B cell (primary cell): ENCODE measurements at regions of chr7 and their contacts with region 1.

Region 1: GRCh38 chr7:130440527-130441365 is at the start of gene CEP41:
- DNase-seq: peak; percentile 93
- ATAC-seq: peak; percentile 97
- H3K4me3 ChIP-seq: peak within 1 kb of the TSS; percentile 26 to 90 (median 87)
- H3K4me3 Mint-ChIP-seq: peak within 1 kb of the TSS; percentile 99
- H3K27ac ChIP-seq: peak within 1 kb of the TSS; percentile 66 to 68
- H3K27ac Mint-ChIP-seq: peak within 1 kb of the TSS; percentile 96
- H3K4me1 ChIP-seq: peaks cover 4 to 10% of the 10 kb centered on the region in 2 donors
- H3K4me1 Mint-ChIP-seq: peaks cover 13% of the 10 kb centered on the region
- H3K27me3 ChIP-seq: no peaks in the 10 kb centered on the region
- H3K27me3 Mint-ChIP-seq: peaks cover 6% of the 10 kb centered on the region
- CTCF ChIP-seq: no peak
- total RNA-seq, gene CEP41: 5.9 and 6.1 TPM in 2 replicates

Region 2: GRCh38 chr7:129859183-129859582 is 581.6 kb before region 1 on chr7:
- CTCF ChIA-PET with region 1: no interaction called
- POLR2A ChIA-PET with region 1: no interaction called
- intact Hi-C with region 1: no loop called
- DNase-seq: peak; percentile 46
- ATAC-seq: peak; percentile 49
- H3K4me3 ChIP-seq: no peak overlapping the region
- H3K4me3 Mint-ChIP-seq: no peak overlapping the region
- H3K27ac ChIP-seq: no peak overlapping the region
- H3K27ac Mint-ChIP-seq: no peak overlapping the region
- H3K4me1 ChIP-seq: peaks cover 34 to 46% of the 10 kb centered on the region in 2 donors
- H3K4me1 Mint-ChIP-seq: peaks cover 62% of the 10 kb centered on the region
- H3K27me3 ChIP-seq: no peaks in the 10 kb centered on the region
- H3K27me3 Mint-ChIP-seq: no peaks in the 10 kb centered on the region
- CTCF ChIP-seq: no peak

Region 3: DNA sequence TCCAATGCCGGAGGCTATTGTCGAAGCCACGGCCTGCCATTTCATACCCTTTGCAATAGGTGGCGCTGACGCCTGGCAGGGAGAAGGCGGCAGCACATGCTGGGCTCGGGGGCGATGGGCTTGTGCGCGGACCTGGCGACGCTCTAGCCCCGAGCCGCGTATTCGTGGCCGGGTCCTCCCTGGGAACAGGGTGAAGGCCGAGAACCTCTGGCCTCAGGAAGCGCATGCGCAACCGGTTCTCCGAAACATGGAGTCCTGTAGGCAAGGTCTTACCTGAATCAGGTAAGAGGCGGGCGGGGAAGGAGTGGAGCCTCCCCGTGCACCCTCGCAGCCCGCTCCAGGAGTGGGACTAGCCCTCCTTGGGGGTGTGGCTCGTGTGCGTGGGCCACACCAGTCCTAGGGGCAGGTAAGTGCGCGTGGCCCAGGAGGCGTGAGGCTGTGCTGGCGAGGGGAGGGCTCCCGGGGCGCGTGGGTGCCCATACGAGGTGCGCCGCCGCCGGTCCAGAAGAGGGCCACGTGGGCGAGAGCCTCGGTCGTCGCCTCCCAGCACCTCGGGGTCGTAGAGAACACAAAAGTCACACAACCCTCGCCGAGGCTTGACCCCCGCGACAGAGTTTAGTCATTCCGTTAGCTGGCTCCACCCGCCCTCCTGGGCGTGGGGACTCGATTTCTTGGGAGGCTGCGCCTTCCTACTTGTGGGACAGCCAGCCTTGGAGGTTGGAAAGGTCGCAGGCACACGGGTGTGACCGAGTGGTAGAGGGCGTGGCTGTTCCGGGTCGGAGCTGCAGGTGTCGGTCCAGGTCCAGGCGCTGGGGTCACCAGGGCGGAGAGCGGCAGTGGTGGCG is 45.6 kb after region 1 on chr7:
- CTCF ChIA-PET with region 1: no interaction called
- POLR2A ChIA-PET with region 1: no interaction called
- intact Hi-C with region 1: loop called (anchors 2 kb)
- DNase-seq: peak; percentile 77
- ATAC-seq: peak; percentile 89
- H3K4me3 ChIP-seq: peak overlapping the region in 4 of 5 experiments; percentile 52 to 73 (median 66)
- H3K4me3 Mint-ChIP-seq: peak overlapping the region; percentile 93
- H3K27ac ChIP-seq: no peak overlapping the region
- H3K27ac Mint-ChIP-seq: peak overlapping the region; percentile 74
- H3K4me1 ChIP-seq: peaks cover 22 to 24% of the 10 kb centered on the region in 2 donors
- H3K4me1 Mint-ChIP-seq: peaks cover 26% of the 10 kb centered on the region
- H3K27me3 ChIP-seq: peaks cover 0 to 32% (median 19%) of the 10 kb centered on the region in 4 experiments
- H3K27me3 Mint-ChIP-seq: peaks cover 53% of the 10 kb centered on the region
- CTCF ChIP-seq: peak; percentile 93